ENCODE measurements at regions of chr11 and their contacts with region 1.

Region 1: DNA sequence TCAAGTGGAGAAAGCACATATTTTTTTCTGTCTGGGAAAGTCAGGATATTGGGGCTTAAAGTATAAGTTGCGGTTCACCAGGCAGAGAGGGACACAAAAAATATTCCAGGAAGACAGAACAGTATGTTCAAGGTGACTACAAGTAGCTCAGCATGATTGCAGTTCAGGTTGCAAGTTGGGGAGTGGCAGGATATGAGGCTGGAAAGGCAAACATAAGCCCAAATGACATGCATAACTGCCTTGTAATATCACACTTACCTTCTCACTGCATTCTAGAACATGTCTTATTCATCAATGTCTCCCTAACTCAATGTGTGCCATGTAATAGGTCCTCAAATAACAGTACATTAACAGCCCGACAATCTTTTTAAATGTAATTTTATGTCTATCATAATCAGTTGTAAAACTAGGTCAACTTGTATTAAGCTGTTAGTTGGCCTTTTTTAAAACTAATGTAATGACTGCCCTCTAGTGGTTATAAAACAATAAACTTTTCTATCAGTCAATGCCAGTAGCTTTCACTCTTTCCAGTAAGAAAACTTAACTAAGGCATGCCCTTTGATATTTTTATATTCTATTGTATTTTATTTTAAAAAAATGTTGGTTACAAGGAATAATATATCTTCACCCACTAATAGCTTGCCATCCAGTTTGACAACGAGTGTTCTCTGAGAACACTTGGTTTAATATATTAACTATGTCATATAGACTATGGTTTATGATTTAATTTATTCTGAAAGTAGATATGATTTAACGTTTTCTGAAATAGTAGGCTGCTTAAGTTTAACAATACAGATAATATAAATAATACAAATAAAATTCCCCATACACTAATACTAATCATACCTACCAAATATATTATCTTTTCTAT is 39.4 kb upstream of the CFAP300 start:
- DNase-seq: peak; percentile 64
- H3K4me3 ChIP-seq: no peak overlapping the region
- H3K27ac ChIP-seq: no peak overlapping the region
- H3K4me1 ChIP-seq: no peaks in the 10 kb centered on the region
- CTCF ChIP-seq: peak; percentile 85

Region 2: GRCh38 chr11:101456812-101457211 is 551.0 kb before region 1 on chr11:
- CTCF ChIA-PET with region 1: no interaction called
- POLR2A ChIA-PET with region 1: no interaction called
- intact Hi-C with region 1: loop called (anchors 10 kb)
- DNase-seq: peak; percentile 62
- H3K4me3 ChIP-seq: no peak overlapping the region
- H3K27ac ChIP-seq: no peak overlapping the region
- H3K4me1 ChIP-seq: no peaks in the 10 kb centered on the region
- CTCF ChIP-seq: peak; percentile 89

Region 3: GRCh38 chr11:101860696-101861427 is 146.9 kb before region 1 on chr11:
- CTCF ChIA-PET with region 1: interaction called, 25 read pairs
- POLR2A ChIA-PET with region 1: interaction called, 30 read pairs
- intact Hi-C with region 1: loop called (anchors 1 kb)
- DNase-seq: peak; percentile 65
- H3K4me3 ChIP-seq: no peak overlapping the region
- H3K27ac ChIP-seq: no peak overlapping the region
- H3K4me1 ChIP-seq: no peaks in the 10 kb centered on the region
- CTCF ChIP-seq: peak; percentile 89

Region 4: GRCh38 chr11:101914738-101915426 is 92.9 kb before region 1 on chr11 and contains the start of gene CEP126:
- CTCF ChIA-PET with region 1: no interaction called
- POLR2A ChIA-PET with region 1: no interaction called
- intact Hi-C with region 1: loop called (anchors 2 kb)
- DNase-seq: peak; percentile 97
- H3K4me3 ChIP-seq: peak within 1 kb of the TSS; percentile 73
- H3K27ac ChIP-seq: peak within 1 kb of the TSS; percentile 78
- H3K4me1 ChIP-seq: peaks cover 18% of the 10 kb centered on the region
- CTCF ChIP-seq: peak; percentile 66
- total RNA-seq, gene CEP126: 1.5 and 3.2 TPM in 2 replicates

Region 5: DNA sequence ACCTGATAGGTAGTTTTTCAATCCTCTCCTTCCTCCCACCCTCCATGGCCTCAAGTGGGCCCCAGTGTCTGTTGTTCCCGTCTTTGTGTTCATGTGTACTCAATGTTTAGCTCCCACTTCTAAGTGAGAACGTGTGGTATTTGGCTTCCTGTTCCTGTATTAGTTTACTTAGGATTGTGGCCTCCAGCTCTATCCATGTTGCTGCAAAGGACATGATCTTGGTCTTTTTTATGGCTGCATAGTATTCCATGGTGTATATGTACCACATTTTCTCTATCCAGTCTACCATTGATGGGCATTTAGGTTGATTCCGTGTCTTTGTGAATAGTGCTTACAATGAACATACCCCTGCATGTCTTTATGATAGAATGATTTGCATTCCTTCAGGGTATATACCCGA is 14.6 kb before region 1 on chr11:
- CTCF ChIA-PET with region 1: no interaction called
- POLR2A ChIA-PET with region 1: interaction called, 11 read pairs
- intact Hi-C with region 1: no loop called
- DNase-seq: no peak
- H3K4me3 ChIP-seq: no peak overlapping the region
- H3K27ac ChIP-seq: no peak overlapping the region
- H3K4me1 ChIP-seq: no peaks in the 10 kb centered on the region
- CTCF ChIP-seq: no peak

Region 6: GRCh38 chr11:102384419-102385079 is 376.7 kb after region 1 on chr11:
- CTCF ChIA-PET with region 1: no interaction called
- POLR2A ChIA-PET with region 1: no interaction called
- intact Hi-C with region 1: no loop called
- DNase-seq: no peak
- H3K4me3 ChIP-seq: no peak overlapping the region
- H3K27ac ChIP-seq: no peak overlapping the region
- H3K4me1 ChIP-seq: no peaks in the 10 kb centered on the region
- CTCF ChIP-seq: no peak

Measured in OCI-LY7 (cell line).